CD8-positive, alpha-beta T cell (primary cell): ENCODE measurements at regions of chr4 and their contacts with region 1.

Region 1: GRCh38 chr4:781493-782216 is 44.3 kb downstream of the CPLX1 start:
- DNase-seq: peak; percentile 97 to 99 (median 98)
- ATAC-seq: peak; percentile 92
- H3K4me3 ChIP-seq: peak overlapping the region; percentile 76 to 97
- H3K4me3 Mint-ChIP-seq: peak overlapping the region; percentile 92
- H3K27ac ChIP-seq: peak overlapping the region; percentile 94 to 95
- H3K27ac Mint-ChIP-seq: peak overlapping the region; percentile 95
- H3K4me1 ChIP-seq: peaks cover 46% of the 10 kb centered on the region
- H3K4me1 Mint-ChIP-seq: peaks cover 52% of the 10 kb centered on the region
- H3K27me3 ChIP-seq: peaks cover 0 to 17% of the 10 kb centered on the region in 2 experiments
- H3K27me3 Mint-ChIP-seq: peaks cover 21% of the 10 kb centered on the region
- CTCF ChIP-seq: no peak

Region 2: GRCh38 chr4:674172-675035 is 107.3 kb before region 1 on chr4 and contains the starts of genes ATP5ME and MYL5:
- CTCF ChIA-PET with region 1: interaction called, 3 read pairs
- POLR2A ChIA-PET with region 1: interaction called, 4 read pairs
- intact Hi-C with region 1: loop called (anchors 1 to 5 kb)
- DNase-seq: peak; percentile 95 to 99 (median 98)
- ATAC-seq: peak; percentile 91
- H3K4me3 ChIP-seq: peak within 1 kb of the TSS; percentile 79 to 92
- H3K4me3 Mint-ChIP-seq: peak within 1 kb of the TSS; percentile 91
- H3K27ac ChIP-seq: peak within 1 kb of the TSS; percentile 93 to 94
- H3K27ac Mint-ChIP-seq: peak within 1 kb of the TSS; percentile 88
- H3K4me1 ChIP-seq: peaks cover 21% of the 10 kb centered on the region
- H3K4me1 Mint-ChIP-seq: peaks cover 7% of the 10 kb centered on the region
- H3K27me3 ChIP-seq: no peaks in the 10 kb centered on the region
- H3K27me3 Mint-ChIP-seq: no peaks in the 10 kb centered on the region
- CTCF ChIP-seq: peak; percentile 87
- total RNA-seq, gene ATP5ME: 113 to 114 TPM
- total RNA-seq, gene MYL5: 27.2 to 28.7 TPM

Region 3: DNA sequence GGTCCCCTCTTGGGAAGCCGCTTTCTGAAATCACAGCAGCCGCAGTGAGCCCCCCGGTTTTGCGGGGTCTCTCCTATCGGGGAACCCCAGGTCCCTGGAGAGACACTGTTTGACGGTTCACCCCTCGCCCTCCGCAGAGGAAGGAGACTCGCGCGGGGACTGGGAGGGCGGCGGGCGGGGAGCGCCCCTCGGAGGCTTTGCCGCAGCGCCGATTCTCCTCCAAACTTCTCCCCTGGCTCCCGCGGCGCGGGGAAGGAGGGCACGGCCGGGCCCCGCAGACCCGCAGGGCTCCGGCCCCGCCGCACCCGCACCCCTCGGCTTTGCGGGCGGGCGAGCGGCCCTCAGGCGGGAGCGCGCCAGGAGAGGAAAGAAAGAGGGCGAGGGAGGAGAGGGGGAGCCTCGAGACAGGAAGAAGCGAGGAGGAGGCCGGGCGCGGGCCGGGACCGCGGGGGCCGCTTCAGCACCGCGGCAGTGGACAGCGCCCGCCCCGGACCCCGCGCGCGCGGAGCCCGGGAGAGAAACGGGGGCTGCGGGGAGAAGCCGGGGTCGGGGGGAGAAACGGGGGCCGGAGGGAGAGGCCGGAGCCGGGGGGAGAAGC is 43.7 kb after region 1 on chr4:
- CTCF ChIA-PET with region 1: no interaction called
- POLR2A ChIA-PET with region 1: no interaction called
- intact Hi-C with region 1: loop called in 1 of 2 experiments (anchors 2 kb)
- DNase-seq: peak in 8 of 9 experiments; percentile 21 to 63 (median 38)
- ATAC-seq: peak; percentile 87
- H3K4me3 ChIP-seq: no peak overlapping the region
- H3K4me3 Mint-ChIP-seq: no peak overlapping the region
- H3K27ac ChIP-seq: no peak overlapping the region
- H3K27ac Mint-ChIP-seq: no peak overlapping the region
- H3K4me1 ChIP-seq: peaks cover 4% of the 10 kb centered on the region
- H3K4me1 Mint-ChIP-seq: peaks cover 5% of the 10 kb centered on the region
- H3K27me3 ChIP-seq: peaks cover 24 to 41% of the 10 kb centered on the region in 2 experiments
- H3K27me3 Mint-ChIP-seq: peaks cover 40% of the 10 kb centered on the region
- CTCF ChIP-seq: no peak

Region 4: GRCh38 chr4:986879-987623 is 205.4 kb after region 1 on chr4 and contains the start of gene IDUA:
- CTCF ChIA-PET with region 1: interaction called, 3 read pairs
- POLR2A ChIA-PET with region 1: interaction called, 3 read pairs
- intact Hi-C with region 1: loop called (anchors 1 to 5 kb)
- DNase-seq: peak; percentile 76 to 94 (median 87)
- ATAC-seq: peak; percentile 85
- H3K4me3 ChIP-seq: peak within 1 kb of the TSS; percentile 64 to 89
- H3K4me3 Mint-ChIP-seq: peak within 1 kb of the TSS; percentile 89
- H3K27ac ChIP-seq: peak within 1 kb of the TSS; percentile 62 to 65
- H3K27ac Mint-ChIP-seq: peak within 1 kb of the TSS; percentile 91
- H3K4me1 ChIP-seq: peaks cover 35% of the 10 kb centered on the region
- H3K4me1 Mint-ChIP-seq: peaks cover 31% of the 10 kb centered on the region
- H3K27me3 ChIP-seq: no peaks in the 10 kb centered on the region
- H3K27me3 Mint-ChIP-seq: no peaks in the 10 kb centered on the region
- CTCF ChIP-seq: peak; percentile 61
- total RNA-seq, gene IDUA: 54.3 to 62.0 TPM

Region 5: GRCh38 chr4:1309261-1310010 is 527.8 kb after region 1 on chr4:
- CTCF ChIA-PET with region 1: no interaction called
- POLR2A ChIA-PET with region 1: no interaction called
- intact Hi-C with region 1: no loop called
- DNase-seq: peak in 8 of 9 experiments; percentile 39 to 80 (median 66)
- ATAC-seq: peak; percentile 74
- H3K4me3 ChIP-seq: peak overlapping the region; percentile 33 to 49
- H3K4me3 Mint-ChIP-seq: peak overlapping the region; percentile 79
- H3K27ac ChIP-seq: peak overlapping the region in 1 of 2 experiments; percentile 37
- H3K27ac Mint-ChIP-seq: peak overlapping the region; percentile 85
- H3K4me1 ChIP-seq: peaks cover 43% of the 10 kb centered on the region
- H3K4me1 Mint-ChIP-seq: peaks cover 59% of the 10 kb centered on the region
- H3K27me3 ChIP-seq: no peaks in the 10 kb centered on the region
- H3K27me3 Mint-ChIP-seq: no peaks in the 10 kb centered on the region
- CTCF ChIP-seq: no peak

Region 6: DNA sequence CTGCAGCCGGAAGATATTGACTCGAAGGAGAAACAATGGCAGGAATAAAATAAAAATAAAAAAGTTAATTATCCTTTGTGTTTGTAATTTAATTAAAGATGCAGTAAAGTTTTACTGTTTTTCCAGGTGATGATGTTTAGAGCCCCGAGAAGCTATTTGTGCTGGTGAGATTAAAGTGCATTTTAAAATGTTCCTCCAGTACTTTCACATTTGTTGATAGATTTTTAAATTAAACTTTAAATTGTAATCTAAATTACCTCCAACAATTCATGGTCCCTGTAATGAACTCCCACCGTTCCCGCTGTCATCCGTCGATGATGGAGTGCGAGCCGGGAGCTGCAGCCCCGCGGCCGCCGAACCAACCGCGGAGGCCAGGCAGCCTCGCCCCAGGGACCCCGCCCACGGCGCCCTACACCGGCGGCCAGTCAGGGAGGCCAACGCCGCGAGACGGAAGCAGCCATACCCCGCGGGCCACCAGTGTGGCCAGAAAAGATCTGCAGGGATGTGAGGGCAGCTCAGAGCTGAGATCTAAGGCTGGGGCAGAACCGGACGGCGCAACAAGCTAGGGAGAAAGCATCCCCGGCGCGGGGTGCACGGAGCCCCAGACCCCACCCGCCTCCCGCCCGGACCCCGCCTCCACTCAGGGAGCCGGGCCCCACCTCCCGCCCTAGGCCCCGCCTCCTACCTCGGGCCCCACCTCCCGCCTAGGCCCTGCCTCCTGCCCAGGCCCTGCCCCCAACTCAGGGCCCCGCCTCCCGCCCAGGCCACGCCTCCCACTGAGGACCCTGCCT is 798.4 kb after region 1 on chr4:
- CTCF ChIA-PET with region 1: no interaction called
- POLR2A ChIA-PET with region 1: no interaction called
- intact Hi-C with region 1: loop called (anchors 2 kb)
- DNase-seq: peak; percentile 83 to 96 (median 93)
- ATAC-seq: peak; percentile 82
- H3K4me3 ChIP-seq: peak overlapping the region; percentile 70 to 78
- H3K4me3 Mint-ChIP-seq: peak overlapping the region; percentile 79
- H3K27ac ChIP-seq: peak overlapping the region; percentile 66 to 73
- H3K27ac Mint-ChIP-seq: peak overlapping the region; percentile 79
- H3K4me1 ChIP-seq: no peaks in the 10 kb centered on the region
- H3K4me1 Mint-ChIP-seq: peaks cover 11% of the 10 kb centered on the region
- H3K27me3 ChIP-seq: no peaks in the 10 kb centered on the region
- H3K27me3 Mint-ChIP-seq: no peaks in the 10 kb centered on the region
- CTCF ChIP-seq: no peak

Region 7: DNA sequence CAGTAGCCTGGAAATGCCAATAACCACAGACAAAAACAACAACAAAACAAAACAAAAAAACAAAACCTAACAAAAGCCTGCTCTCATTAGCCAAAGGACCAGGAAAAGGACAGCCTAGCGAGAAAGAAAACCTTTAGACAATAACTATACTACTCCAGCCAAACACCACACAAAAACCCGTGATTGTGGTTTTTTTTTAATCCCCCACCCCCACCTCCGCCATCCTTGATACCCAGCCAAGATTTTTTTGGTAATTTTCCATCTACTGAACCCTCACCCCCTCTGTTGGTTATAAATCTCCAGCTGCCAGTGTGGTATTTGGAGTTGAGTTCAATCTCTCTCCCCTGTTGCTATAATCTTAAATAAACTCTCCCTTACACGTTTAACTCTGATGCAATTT is 1361.0 kb after region 1 on chr4:
- CTCF ChIA-PET with region 1: no interaction called
- POLR2A ChIA-PET with region 1: no interaction called
- intact Hi-C with region 1: no loop called
- DNase-seq: no peak
- ATAC-seq: no peak
- H3K4me3 ChIP-seq: no peak overlapping the region
- H3K4me3 Mint-ChIP-seq: no peak overlapping the region
- H3K27ac ChIP-seq: no peak overlapping the region
- H3K27ac Mint-ChIP-seq: no peak overlapping the region
- H3K4me1 ChIP-seq: peaks cover 19% of the 10 kb centered on the region
- H3K4me1 Mint-ChIP-seq: peaks cover 20% of the 10 kb centered on the region
- H3K27me3 ChIP-seq: no peaks in the 10 kb centered on the region
- H3K27me3 Mint-ChIP-seq: peaks cover 2% of the 10 kb centered on the region
- CTCF ChIP-seq: no peak